ENCODE measurements at regions of chr6 and their contacts with region 1.

Region 1: DNA sequence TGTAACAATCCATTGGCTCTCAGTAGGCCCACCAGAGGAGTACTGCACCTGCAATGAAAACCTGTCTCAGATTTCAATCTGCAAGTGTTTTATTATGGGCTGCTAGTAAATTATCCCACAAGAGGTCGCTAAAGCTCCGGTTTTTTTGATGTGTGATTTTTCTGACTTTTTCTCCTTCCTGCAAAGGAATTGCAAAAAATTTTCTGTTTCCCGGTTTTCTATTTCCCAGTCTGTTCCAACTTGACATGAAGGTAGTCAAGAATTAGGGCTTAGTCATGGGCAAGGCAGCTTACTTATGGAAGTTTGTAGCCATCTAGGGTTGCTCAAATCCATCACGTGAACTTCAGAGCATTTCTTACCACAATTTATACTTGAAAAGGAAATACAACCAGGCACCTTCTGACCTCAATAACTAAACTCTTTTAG is 38.5 kb upstream of the AHI1 start:
- DNase-seq: no peak
- H3K4me3 ChIP-seq: no peak overlapping the region
- H3K27ac ChIP-seq: no peak overlapping the region
- H3K4me1 ChIP-seq: peaks cover 0 to 4% (median 0%) of the 10 kb centered on the region in 4 donors
- H3K27me3 ChIP-seq: no peaks in the 10 kb centered on the region
- CTCF ChIP-seq: peak; percentile 48 to 63 (median 56)
- EP300 ChIP-seq: no peak
- POLR2A ChIP-seq: no peak

Region 2: GRCh38 chr6:135909737-135910387 is 373.9 kb after region 1 on chr6:
- in situ Hi-C with region 1: loop called in 1 of 4 experiments (anchors 25 kb)
- intact Hi-C with region 1: no loop called
- DNase-seq: peak; percentile 39
- H3K4me3 ChIP-seq: no peak overlapping the region
- H3K27ac ChIP-seq: no peak overlapping the region
- H3K4me1 ChIP-seq: no peaks in the 10 kb centered on the region
- H3K27me3 ChIP-seq: no peaks in the 10 kb centered on the region
- CTCF ChIP-seq: peak; percentile 30 to 54 (median 49)
- EP300 ChIP-seq: no peak
- POLR2A ChIP-seq: no peak

Region 3: GRCh38 chr6:136201732-136202131 is 665.7 kb after region 1 on chr6:
- in situ Hi-C with region 1: loop called in 1 of 4 experiments (anchors 25 kb)
- intact Hi-C with region 1: no loop called
- DNase-seq: no peak
- H3K4me3 ChIP-seq: no peak overlapping the region
- H3K27ac ChIP-seq: no peak overlapping the region
- H3K4me1 ChIP-seq: no peaks in the 10 kb centered on the region
- H3K27me3 ChIP-seq: no peaks in the 10 kb centered on the region
- CTCF ChIP-seq: no peak
- EP300 ChIP-seq: no peak
- POLR2A ChIP-seq: no peak

Region 4: GRCh38 chr6:136226027-136226673 is 690.1 kb after region 1 on chr6:
- in situ Hi-C with region 1: loop called (anchors 5 to 25 kb)
- intact Hi-C with region 1: loop called (anchors 10 kb)
- DNase-seq: peak; percentile 60
- H3K4me3 ChIP-seq: peak overlapping the region in 2 of 4 donors; percentile 10 to 47
- H3K27ac ChIP-seq: peak overlapping the region; percentile 6 to 69 (median 49)
- H3K4me1 ChIP-seq: peaks cover 4 to 20% (median 9%) of the 10 kb centered on the region in 4 donors
- H3K27me3 ChIP-seq: no peaks in the 10 kb centered on the region
- CTCF ChIP-seq: peak; percentile 99 to 100 (median 100)
- EP300 ChIP-seq: no peak
- POLR2A ChIP-seq: no peak

Region 5: GRCh38 chr6:136317021-136317694 is 781.2 kb after region 1 on chr6:
- in situ Hi-C with region 1: loop called in 1 of 4 experiments (anchors 25 kb)
- intact Hi-C with region 1: no loop called
- DNase-seq: peak; percentile 63
- H3K4me3 ChIP-seq: no peak overlapping the region
- H3K27ac ChIP-seq: no peak overlapping the region
- H3K4me1 ChIP-seq: no peaks in the 10 kb centered on the region
- H3K27me3 ChIP-seq: no peaks in the 10 kb centered on the region
- CTCF ChIP-seq: peak; percentile 77 to 82 (median 80)
- EP300 ChIP-seq: no peak
- POLR2A ChIP-seq: no peak